CD8-positive, alpha-beta T cell (primary cell): ENCODE measurements at regions of chrX and their contacts with region 1.

Region 1: GRCh38 chrX:71181910-71182799 is 37.5 kb downstream of the NLGN3 start:
- DNase-seq: peak; percentile 56 to 94 (median 78)
- ATAC-seq: peak; percentile 92
- H3K4me3 ChIP-seq: peak overlapping the region; percentile 66 to 74
- H3K4me3 Mint-ChIP-seq: peak overlapping the region; percentile 96
- H3K27ac ChIP-seq: peak overlapping the region; percentile 78 to 97
- H3K27ac Mint-ChIP-seq: peak overlapping the region; percentile 100
- H3K4me1 ChIP-seq: peaks cover 7% of the 10 kb centered on the region
- H3K4me1 Mint-ChIP-seq: peaks cover 15% of the 10 kb centered on the region
- H3K27me3 ChIP-seq: no peaks in the 10 kb centered on the region
- H3K27me3 Mint-ChIP-seq: no peaks in the 10 kb centered on the region
- CTCF ChIP-seq: no peak

Region 2: GRCh38 chrX:70454441-70455365 is 727.5 kb before region 1 on chrX:
- CTCF ChIA-PET with region 1: no interaction called
- POLR2A ChIA-PET with region 1: no interaction called
- intact Hi-C with region 1: loop called (anchors 10 kb)
- DNase-seq: peak; percentile 33 to 85 (median 66)
- ATAC-seq: peak; percentile 68
- H3K4me3 ChIP-seq: peak overlapping the region; percentile 62
- H3K4me3 Mint-ChIP-seq: peak overlapping the region; percentile 82
- H3K27ac ChIP-seq: peak overlapping the region; percentile 23 to 74
- H3K27ac Mint-ChIP-seq: peak overlapping the region; percentile 86
- H3K4me1 ChIP-seq: peaks cover 26% of the 10 kb centered on the region
- H3K4me1 Mint-ChIP-seq: peaks cover 39% of the 10 kb centered on the region
- H3K27me3 ChIP-seq: no peaks in the 10 kb centered on the region
- H3K27me3 Mint-ChIP-seq: no peaks in the 10 kb centered on the region
- CTCF ChIP-seq: peak; percentile 57

Region 3: GRCh38 chrX:70970482-70970995 is 211.6 kb before region 1 on chrX:
- CTCF ChIA-PET with region 1: interaction called, 23 read pairs
- POLR2A ChIA-PET with region 1: interaction called, 3 read pairs
- intact Hi-C with region 1: loop called (anchors 2 kb)
- DNase-seq: peak in 2 of 9 experiments; percentile 15 to 29
- ATAC-seq: no peak
- H3K4me3 ChIP-seq: no peak overlapping the region
- H3K4me3 Mint-ChIP-seq: peak overlapping the region; percentile 62
- H3K27ac ChIP-seq: no peak overlapping the region
- H3K27ac Mint-ChIP-seq: no peak overlapping the region
- H3K4me1 ChIP-seq: no peaks in the 10 kb centered on the region
- H3K4me1 Mint-ChIP-seq: peaks cover 6% of the 10 kb centered on the region
- H3K27me3 ChIP-seq: no peaks in the 10 kb centered on the region
- H3K27me3 Mint-ChIP-seq: no peaks in the 10 kb centered on the region
- CTCF ChIP-seq: peak; percentile 33

Region 4: GRCh38 chrX:71095543-71095911 is 86.6 kb before region 1 on chrX and contains the start of gene FOXO4:
- CTCF ChIA-PET with region 1: interaction called, 11 read pairs
- POLR2A ChIA-PET with region 1: interaction called, 12 read pairs
- intact Hi-C with region 1: loop called (anchors 1 to 2 kb)
- DNase-seq: peak; percentile 74 to 94 (median 88)
- ATAC-seq: peak; percentile 82
- H3K4me3 ChIP-seq: peak within 1 kb of the TSS; percentile 73 to 78
- H3K4me3 Mint-ChIP-seq: peak within 1 kb of the TSS; percentile 93
- H3K27ac ChIP-seq: peak within 1 kb of the TSS; percentile 34 to 68
- H3K27ac Mint-ChIP-seq: peak within 1 kb of the TSS; percentile 93
- H3K4me1 ChIP-seq: peaks cover 30% of the 10 kb centered on the region
- H3K4me1 Mint-ChIP-seq: peaks cover 37% of the 10 kb centered on the region
- H3K27me3 ChIP-seq: no peaks in the 10 kb centered on the region
- H3K27me3 Mint-ChIP-seq: no peaks in the 10 kb centered on the region
- CTCF ChIP-seq: no peak
- total RNA-seq, gene FOXO4: 24.1 to 32.6 TPM

Region 5: DNA sequence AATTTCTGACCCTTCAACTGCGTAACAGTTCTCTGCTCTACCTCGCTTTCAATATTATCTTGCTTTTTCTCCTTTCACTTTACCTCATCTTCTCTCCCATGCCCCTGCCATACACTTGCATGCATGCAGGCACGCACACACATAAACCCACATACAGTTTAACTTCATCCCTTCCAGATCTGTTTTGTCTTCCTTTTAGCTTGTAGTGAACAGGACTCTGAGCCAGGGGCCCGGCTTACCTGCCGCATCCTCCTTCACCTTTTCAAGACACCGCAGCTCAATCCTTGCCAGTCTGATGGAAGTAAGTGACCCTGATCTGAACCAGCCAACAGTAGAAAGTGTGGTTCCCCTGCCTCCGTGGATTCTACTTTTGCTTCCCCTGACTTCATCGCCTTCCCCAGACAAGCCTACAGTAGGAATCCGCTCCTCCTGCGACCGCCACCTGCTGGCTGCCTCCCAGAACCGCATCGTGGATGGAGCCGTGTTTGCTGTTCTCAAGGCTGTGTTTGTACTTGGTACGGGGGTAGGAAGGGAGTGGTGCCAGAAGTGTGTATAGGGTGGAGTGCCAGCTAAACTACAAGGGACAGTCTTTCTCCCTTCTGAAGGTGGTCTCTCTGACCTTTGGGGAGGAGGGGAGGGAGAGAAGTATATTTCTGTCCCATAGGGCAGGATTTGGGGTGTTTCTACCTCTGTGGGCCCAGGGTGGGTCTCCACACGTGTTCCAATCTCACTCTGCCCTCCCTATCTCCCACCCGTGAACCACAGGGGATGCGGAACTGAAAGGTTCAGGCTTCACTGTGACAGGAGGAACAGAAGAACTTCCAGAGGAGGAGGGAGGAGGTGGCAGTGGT is 53.0 kb before region 1 on chrX:
- CTCF ChIA-PET with region 1: interaction called, 11 read pairs
- POLR2A ChIA-PET with region 1: no interaction called
- intact Hi-C with region 1: loop called (anchors 1 kb)
- DNase-seq: peak; percentile 58 to 86 (median 73)
- ATAC-seq: peak; percentile 98
- H3K4me3 ChIP-seq: no peak overlapping the region
- H3K4me3 Mint-ChIP-seq: no peak overlapping the region
- H3K27ac ChIP-seq: peak overlapping the region in 1 of 2 experiments; percentile 32
- H3K27ac Mint-ChIP-seq: peak overlapping the region; percentile 91
- H3K4me1 ChIP-seq: peaks cover 10% of the 10 kb centered on the region
- H3K4me1 Mint-ChIP-seq: peaks cover 19% of the 10 kb centered on the region
- H3K27me3 ChIP-seq: no peaks in the 10 kb centered on the region
- H3K27me3 Mint-ChIP-seq: no peaks in the 10 kb centered on the region
- CTCF ChIP-seq: peak; percentile 62

Region 6: GRCh38 chrX:71283403-71284143 is 101.4 kb after region 1 on chrX and contains the start of gene NONO:
- CTCF ChIA-PET with region 1: interaction called, 7 read pairs
- POLR2A ChIA-PET with region 1: interaction called, 22 read pairs
- intact Hi-C with region 1: loop called (anchors 1 to 5 kb)
- DNase-seq: peak; percentile 56 to 98 (median 80)
- ATAC-seq: peak; percentile 85
- H3K4me3 ChIP-seq: peak within 1 kb of the TSS; percentile 65 to 86
- H3K4me3 Mint-ChIP-seq: peak within 1 kb of the TSS; percentile 99
- H3K27ac ChIP-seq: peak within 1 kb of the TSS; percentile 90 to 98
- H3K27ac Mint-ChIP-seq: peak within 1 kb of the TSS; percentile 100
- H3K4me1 ChIP-seq: peaks cover 26% of the 10 kb centered on the region
- H3K4me1 Mint-ChIP-seq: peaks cover 24% of the 10 kb centered on the region
- H3K27me3 ChIP-seq: no peaks in the 10 kb centered on the region
- H3K27me3 Mint-ChIP-seq: no peaks in the 10 kb centered on the region
- CTCF ChIP-seq: no peak
- total RNA-seq, gene NONO: 488 to 500 TPM